Caco-2 (cell line): ENCODE measurements at regions of chr13 and their contacts with region 1.

Region 1: GRCh38 chr13:97212601-97213040 is 9.5 kb upstream of the MBNL2 start:
- DNase-seq: peak in 1 of 2 experiments; percentile 65
- H3K4me3 ChIP-seq: no peak overlapping the region
- H3K4me3 Mint-ChIP-seq: no peak overlapping the region
- H3K27ac Mint-ChIP-seq: no peak overlapping the region
- H3K4me1 ChIP-seq: peaks cover 24% of the 10 kb centered on the region
- H3K4me1 Mint-ChIP-seq: peaks cover 22% of the 10 kb centered on the region
- H3K27me3 ChIP-seq: no peaks in the 10 kb centered on the region
- H3K27me3 Mint-ChIP-seq: no peaks in the 10 kb centered on the region
- CTCF ChIP-seq: peak; percentile 59 to 69

Region 2: GRCh38 chr13:97124916-97125809 is 87.5 kb before region 1 on chr13:
- CTCF ChIA-PET with region 1: interaction called, 3 read pairs
- POLR2A ChIA-PET with region 1: no interaction called
- intact Hi-C with region 1: loop called (anchors 5 kb)
- DNase-seq: peak; percentile 44 to 46
- H3K4me3 ChIP-seq: no peak overlapping the region
- H3K4me3 Mint-ChIP-seq: no peak overlapping the region
- H3K27ac Mint-ChIP-seq: no peak overlapping the region
- H3K4me1 ChIP-seq: peaks cover 62% of the 10 kb centered on the region
- H3K4me1 Mint-ChIP-seq: peaks cover 59% of the 10 kb centered on the region
- H3K27me3 ChIP-seq: no peaks in the 10 kb centered on the region
- H3K27me3 Mint-ChIP-seq: no peaks in the 10 kb centered on the region
- CTCF ChIP-seq: peak in 1 of 2 experiments; percentile 14

Region 3: DNA sequence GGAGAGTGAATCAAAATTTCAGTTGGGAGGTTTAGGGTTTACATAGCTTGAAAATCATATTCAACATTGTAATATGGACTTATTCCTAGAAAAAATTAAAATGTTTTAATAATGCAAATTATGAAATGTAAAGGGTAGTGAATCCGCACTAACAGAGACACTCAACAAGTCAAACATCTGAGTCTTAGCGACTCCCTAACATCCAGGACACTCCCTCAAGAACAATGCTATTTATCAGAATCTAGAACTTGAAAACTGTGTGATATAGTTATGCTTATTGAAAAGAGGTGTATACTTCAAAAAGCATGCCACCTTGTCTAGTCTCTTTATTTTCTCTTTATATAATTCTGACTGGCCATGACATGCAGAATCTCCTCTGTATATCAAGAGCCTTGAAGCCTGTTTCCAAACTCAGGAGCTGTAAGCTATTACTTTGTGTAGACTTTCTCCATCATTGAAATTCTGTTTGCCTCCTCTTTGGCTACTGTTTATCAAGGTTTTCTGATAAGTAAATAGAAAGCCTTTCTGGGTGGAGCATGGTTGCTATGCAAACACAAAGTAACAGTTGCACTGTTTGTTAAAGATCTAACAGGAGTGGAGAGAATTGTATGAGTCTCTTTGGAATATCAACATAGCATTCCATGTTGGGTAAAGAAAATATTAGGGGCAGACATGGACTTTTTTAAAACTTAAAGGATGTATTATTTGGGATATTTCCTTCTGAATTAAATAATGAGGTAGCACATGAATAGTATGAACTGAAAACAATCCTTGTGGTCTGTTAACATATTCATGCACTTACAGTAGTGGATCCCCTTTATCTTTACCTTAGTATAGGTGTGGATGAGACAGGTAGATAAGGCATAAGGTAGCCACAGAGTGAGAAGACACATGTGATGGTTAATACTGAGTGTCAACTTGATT is 46.9 kb before region 1 on chr13:
- CTCF ChIA-PET with region 1: no interaction called
- POLR2A ChIA-PET with region 1: no interaction called
- intact Hi-C with region 1: loop called (anchors 1 kb)
- DNase-seq: peak in 1 of 2 experiments; percentile 55
- H3K4me3 ChIP-seq: no peak overlapping the region
- H3K4me3 Mint-ChIP-seq: no peak overlapping the region
- H3K27ac Mint-ChIP-seq: peak overlapping the region; percentile 72
- H3K4me1 ChIP-seq: peaks cover 11% of the 10 kb centered on the region
- H3K4me1 Mint-ChIP-seq: peaks cover 23% of the 10 kb centered on the region
- H3K27me3 ChIP-seq: no peaks in the 10 kb centered on the region
- H3K27me3 Mint-ChIP-seq: no peaks in the 10 kb centered on the region
- CTCF ChIP-seq: no peak